Activated CD8-positive, alpha-beta T cell treated with anti-CD3 and anti-CD28 coated beads for 36 hours (primary cell): ENCODE measurements at regions of chr12 and their contacts with region 1.

Region 1: GRCh38 chr12:12837025-12837872 is 24.1 kb downstream of the DDX47 start:
- DNase-seq: peak; percentile 65
- ATAC-seq: peak; percentile 94
- H3K4me3 Mint-ChIP-seq: no peak overlapping the region
- H3K27ac Mint-ChIP-seq: no peak overlapping the region
- H3K4me1 Mint-ChIP-seq: peaks cover 26% of the 10 kb centered on the region
- H3K27me3 Mint-ChIP-seq: no peaks in the 10 kb centered on the region
- CTCF ChIP-seq: peak; percentile 46

Region 2: DNA sequence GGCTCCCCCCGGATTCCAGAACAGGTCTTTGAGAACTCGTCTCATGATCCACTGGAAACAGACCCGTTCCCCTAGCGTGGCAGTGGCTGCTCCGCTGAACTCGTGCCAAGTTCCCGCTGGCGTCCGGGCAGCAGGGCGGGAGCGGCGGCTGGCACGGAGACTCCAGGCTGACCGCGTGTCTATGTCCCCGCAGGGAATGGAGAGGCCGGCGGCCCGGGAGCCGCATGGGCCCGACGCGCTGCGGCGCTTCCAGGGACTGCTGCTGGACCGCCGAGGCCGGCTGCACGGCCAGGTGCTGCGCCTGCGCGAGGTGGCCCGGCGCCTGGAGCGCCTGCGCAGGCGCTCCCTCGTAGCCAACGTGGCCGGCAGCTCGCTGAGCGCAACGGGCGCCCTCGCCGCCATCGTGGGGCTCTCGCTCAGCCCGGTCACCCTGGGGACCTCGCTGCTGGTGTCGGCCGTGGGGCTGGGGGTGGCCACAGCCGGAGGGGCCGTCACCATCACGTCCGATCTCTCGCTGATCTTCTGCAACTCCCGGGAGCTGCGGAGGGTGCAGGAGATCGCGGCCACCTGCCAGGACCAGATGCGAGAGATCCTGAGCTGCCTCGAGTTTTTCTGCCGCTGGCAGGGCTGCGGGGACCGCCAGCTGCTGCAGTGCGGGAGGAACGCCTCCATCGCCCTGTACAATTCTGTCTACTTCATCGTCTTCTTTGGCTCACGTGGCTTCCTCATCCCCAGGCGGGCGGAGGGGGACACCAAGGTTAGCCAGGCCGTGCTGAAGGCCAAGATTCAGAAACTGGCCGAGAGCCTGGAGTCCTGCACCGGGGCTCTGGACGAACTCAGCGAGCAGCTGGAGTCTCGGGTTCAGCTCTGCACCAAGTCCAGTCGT is 50.3 kb before region 1 on chr12:
- CTCF ChIA-PET with region 1: interaction called, 32 read pairs
- POLR2A ChIA-PET with region 1: no interaction called
- intact Hi-C with region 1: no loop called
- DNase-seq: peak; percentile 67
- ATAC-seq: peak; percentile 88
- H3K4me3 Mint-ChIP-seq: peak overlapping the region; percentile 86
- H3K27ac Mint-ChIP-seq: peak overlapping the region; percentile 89
- H3K4me1 Mint-ChIP-seq: peaks cover 36% of the 10 kb centered on the region
- H3K27me3 Mint-ChIP-seq: no peaks in the 10 kb centered on the region
- CTCF ChIP-seq: no peak

Region 3: DNA sequence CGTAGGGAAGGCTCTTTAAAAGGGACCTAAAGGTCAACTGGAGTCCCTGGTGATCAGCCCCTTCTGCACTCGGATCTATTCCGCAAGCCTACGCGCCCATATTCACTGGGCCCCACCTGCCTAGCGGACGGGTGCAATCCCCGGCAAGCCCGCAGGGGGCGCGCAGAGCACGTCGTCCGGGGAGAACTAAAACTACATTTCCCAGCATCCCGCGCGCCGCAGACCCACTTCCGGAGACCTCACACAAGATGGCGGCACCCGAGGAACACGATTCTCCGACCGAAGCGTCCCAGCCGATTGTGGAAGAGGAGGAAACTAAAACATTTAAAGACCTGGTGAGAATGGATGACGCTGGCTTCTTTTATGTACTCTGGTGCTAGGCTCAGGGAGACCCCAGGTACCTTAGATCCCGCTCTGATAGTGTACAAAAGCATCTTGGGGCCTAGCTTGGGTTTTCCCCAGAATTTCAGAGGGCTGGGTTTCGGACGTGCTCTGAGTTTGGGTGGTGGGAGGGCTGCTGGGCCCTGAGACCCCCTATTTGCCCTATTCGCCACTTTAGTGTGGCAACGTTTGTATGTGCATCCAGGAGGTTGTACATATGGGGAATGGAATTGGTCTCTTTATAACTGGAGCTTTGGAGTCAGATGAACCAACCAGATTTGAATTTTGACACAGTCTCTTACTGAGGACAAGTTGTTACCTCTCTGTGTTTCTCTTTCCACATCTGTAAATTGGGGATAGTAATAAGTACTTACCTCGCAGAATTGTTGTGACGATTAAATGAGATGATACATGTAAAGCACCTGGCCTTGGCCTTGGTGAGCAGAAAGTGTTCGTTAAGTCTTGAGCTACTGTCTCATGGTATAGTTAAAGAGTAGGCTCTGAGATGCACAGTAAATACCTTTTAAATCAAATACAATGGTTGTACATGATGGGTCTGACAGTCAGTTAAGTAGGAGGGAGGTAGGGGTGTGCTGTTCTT is 23.8 kb before region 1 on chr12 and contains the start of gene DDX47:
- CTCF ChIA-PET with region 1: interaction called, 16 read pairs
- POLR2A ChIA-PET with region 1: interaction called, 5 read pairs
- intact Hi-C with region 1: no loop called
- DNase-seq: peak; percentile 99
- ATAC-seq: peak; percentile 94
- H3K4me3 Mint-ChIP-seq: peak within 1 kb of the TSS; percentile 99
- H3K27ac Mint-ChIP-seq: peak within 1 kb of the TSS; percentile 93
- H3K4me1 Mint-ChIP-seq: peaks cover 58% of the 10 kb centered on the region
- H3K27me3 Mint-ChIP-seq: no peaks in the 10 kb centered on the region
- CTCF ChIP-seq: peak; percentile 90
- total RNA-seq, gene DDX47: 86.0 to 96.9 TPM

Region 4: GRCh38 chr12:12819671-12820311 is 17.5 kb before region 1 on chr12:
- CTCF ChIA-PET with region 1: interaction called, 12 read pairs
- POLR2A ChIA-PET with region 1: no interaction called
- intact Hi-C with region 1: no loop called
- DNase-seq: no peak
- ATAC-seq: no peak
- H3K4me3 Mint-ChIP-seq: no peak overlapping the region
- H3K27ac Mint-ChIP-seq: peak overlapping the region; percentile 4
- H3K4me1 Mint-ChIP-seq: peaks cover 57% of the 10 kb centered on the region
- H3K27me3 Mint-ChIP-seq: no peaks in the 10 kb centered on the region
- CTCF ChIP-seq: no peak

Region 5: GRCh38 chr12:12853435-12853834 is 16.2 kb after region 1 on chr12:
- CTCF ChIA-PET with region 1: interaction called, 10 read pairs
- POLR2A ChIA-PET with region 1: no interaction called
- intact Hi-C with region 1: no loop called
- DNase-seq: no peak
- ATAC-seq: no peak
- H3K4me3 Mint-ChIP-seq: no peak overlapping the region
- H3K27ac Mint-ChIP-seq: no peak overlapping the region
- H3K4me1 Mint-ChIP-seq: no peaks in the 10 kb centered on the region
- H3K27me3 Mint-ChIP-seq: no peaks in the 10 kb centered on the region
- CTCF ChIP-seq: no peak

Region 6: GRCh38 chr12:12890815-12891645 is 53.8 kb after region 1 on chr12 and contains the start of gene GPRC5A:
- CTCF ChIA-PET with region 1: interaction called, 16 read pairs
- POLR2A ChIA-PET with region 1: no interaction called
- intact Hi-C with region 1: loop called (anchors 10 kb)
- DNase-seq: peak; percentile 58
- ATAC-seq: peak; percentile 80
- H3K4me3 Mint-ChIP-seq: peak within 1 kb of the TSS; percentile 73
- H3K27ac Mint-ChIP-seq: no peak within 1 kb of the TSS
- H3K4me1 Mint-ChIP-seq: peaks cover 6% of the 10 kb centered on the region
- H3K27me3 Mint-ChIP-seq: peaks cover 33% of the 10 kb centered on the region
- CTCF ChIP-seq: no peak
- total RNA-seq, gene GPRC5A: 0.11 TPM in 1 of 2 experiments, not detected in the other